Lower leg skin (tissue), 4 donors: ENCODE measurements at regions of chr1 and their contacts with region 1.

Region 1: DNA sequence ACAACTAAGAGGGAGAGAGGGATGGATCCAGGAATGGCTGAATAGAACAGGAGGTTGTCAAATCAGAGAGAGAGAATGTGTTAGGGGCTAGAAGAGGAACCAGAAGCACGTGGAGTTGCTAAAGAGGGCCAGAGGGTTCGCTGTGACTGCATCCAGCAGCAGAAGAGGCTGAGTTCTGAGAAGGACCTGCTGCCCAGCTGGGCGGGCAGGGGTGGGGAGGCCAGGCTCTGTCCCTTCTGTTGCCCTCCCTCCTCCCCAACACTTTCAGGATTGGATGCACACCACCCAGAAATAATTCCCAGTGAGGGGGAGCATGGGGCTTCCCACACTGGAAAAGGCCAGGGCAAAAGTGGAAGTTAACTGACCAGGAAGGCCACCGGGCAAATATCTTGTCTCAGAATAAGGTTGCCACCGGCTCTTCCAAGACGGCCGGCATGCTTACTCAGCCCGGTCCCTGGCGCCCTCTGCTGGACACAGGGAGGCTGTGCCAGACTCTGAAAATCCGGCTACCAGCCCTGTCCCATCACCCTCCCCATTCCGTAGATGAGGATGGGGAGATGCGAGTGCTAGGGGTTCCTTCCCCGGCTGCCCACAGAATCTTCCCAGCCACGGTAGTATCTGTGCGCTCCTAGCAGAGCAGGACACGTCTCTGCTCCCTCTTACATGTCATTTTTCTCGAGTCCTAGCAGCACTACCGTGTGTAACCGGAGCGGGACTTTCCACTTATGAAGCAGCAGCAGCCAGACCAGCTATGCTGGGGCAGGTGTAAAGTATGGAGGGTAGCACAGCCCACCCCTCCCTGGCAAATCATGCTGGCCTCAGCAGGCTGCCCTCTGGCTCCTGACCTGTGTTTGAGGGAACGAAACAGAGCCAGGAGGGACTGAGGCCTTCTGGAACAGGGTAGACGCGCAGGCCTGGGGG is 46.8 kb upstream of the A3GALT2 start:
- DNase-seq: peak; percentile 80 to 97
- H3K4me3 ChIP-seq: no peak overlapping the region
- CTCF ChIP-seq: peak in 1 of 3 donors; percentile 93
- POLR2A ChIP-seq: no peak

Region 2: DNA sequence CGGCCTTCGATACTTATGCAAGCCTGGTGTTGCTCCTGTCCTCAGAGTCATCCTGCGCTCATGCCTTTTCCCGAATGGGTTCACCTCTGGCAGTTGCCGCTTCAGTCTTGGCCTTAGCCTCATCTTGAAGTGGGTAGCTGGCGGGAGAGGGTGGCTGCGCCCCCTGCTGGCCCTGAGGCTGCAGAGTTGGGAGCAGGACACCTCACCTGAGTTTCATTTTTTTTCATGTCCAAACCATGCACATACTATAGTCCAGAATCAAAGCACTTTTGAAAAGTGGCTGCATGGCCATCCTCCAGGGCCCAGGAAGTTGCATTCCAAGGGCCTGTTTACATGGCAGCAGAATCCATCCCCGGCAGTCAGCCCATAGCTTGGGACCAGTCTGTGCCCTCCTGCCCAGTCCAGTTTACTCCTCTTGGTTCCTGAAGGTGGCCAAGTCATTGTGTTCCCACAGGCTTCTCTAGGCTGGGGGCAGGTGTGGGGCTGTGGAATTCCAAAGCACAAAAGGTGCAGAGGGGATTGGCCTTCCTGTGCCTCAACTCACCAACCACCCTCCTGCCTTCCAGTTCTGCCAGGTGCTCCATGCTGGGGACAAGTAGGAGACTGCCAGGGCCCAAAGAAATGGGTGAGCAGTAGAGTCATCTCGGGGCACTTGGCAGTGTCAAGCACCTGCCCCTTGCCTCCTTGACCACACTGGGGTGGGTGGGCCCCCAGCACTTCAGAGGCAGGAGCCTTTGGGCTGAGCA is 594.6 kb before region 1 on chr1:
- intact Hi-C with region 1: no loop called
- DNase-seq: peak; percentile 76 to 94
- H3K4me3 ChIP-seq: no peak overlapping the region
- CTCF ChIP-seq: peak in 1 of 3 donors; percentile 86
- POLR2A ChIP-seq: no peak

Region 3: GRCh38 chr1:33094971-33095604 is 272.7 kb before region 1 on chr1:
- intact Hi-C with region 1: loop called (anchors 5 kb)
- DNase-seq: peak; percentile 62 to 91
- H3K4me3 ChIP-seq: no peak overlapping the region
- CTCF ChIP-seq: peak in 1 of 3 donors; percentile 60
- POLR2A ChIP-seq: no peak

Region 4: DNA sequence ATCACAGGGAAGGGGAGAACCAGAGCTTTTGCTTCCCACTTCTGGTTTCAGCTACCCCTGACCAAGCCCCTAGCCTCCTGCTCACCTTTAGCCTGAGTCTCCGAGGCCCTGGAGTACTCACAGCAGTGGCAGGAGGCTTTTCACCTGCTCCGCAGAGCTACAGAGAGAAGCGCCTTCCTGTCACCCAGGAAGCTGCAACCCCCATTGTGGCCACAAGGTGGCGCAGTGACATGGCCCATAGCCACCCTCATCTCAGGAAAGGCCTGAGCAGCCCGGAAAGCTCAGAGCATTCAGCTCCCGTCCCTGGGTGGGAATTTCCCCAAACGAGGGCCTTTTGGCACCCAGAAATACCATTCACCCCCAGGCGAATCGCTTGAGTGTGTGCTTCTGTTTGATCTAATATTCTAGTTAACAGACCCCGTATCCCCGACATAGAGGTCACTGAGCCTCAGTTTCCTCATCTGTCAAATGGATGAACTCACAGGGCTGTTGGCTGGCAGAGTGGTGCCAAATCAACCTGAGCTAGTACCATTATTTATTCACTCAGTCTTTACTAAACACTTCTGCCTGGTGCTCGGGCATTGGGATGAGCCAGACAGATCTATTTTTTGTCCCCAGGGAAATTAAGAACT is 72.2 kb before region 1 on chr1:
- intact Hi-C with region 1: loop called (anchors 5 kb)
- DNase-seq: peak; percentile 87 to 98
- H3K4me3 ChIP-seq: no peak overlapping the region
- CTCF ChIP-seq: peak in 1 of 3 donors; percentile 95
- POLR2A ChIP-seq: no peak

Region 5: GRCh38 chr1:33610864-33611455 is 243.2 kb after region 1 on chr1:
- intact Hi-C with region 1: loop called (anchors 5 kb)
- DNase-seq: no peak
- H3K4me3 ChIP-seq: no peak overlapping the region
- CTCF ChIP-seq: no peak
- POLR2A ChIP-seq: no peak